ENCODE measurements at regions of chr3 and their contacts with region 1.

Region 1: GRCh38 chr3:33372218-33373081 is 67.8 kb downstream of the UBP1 start:
- DNase-seq: no peak
- H3K4me3 ChIP-seq: no peak overlapping the region
- CTCF ChIP-seq: peak; percentile 79

Region 2: DNA sequence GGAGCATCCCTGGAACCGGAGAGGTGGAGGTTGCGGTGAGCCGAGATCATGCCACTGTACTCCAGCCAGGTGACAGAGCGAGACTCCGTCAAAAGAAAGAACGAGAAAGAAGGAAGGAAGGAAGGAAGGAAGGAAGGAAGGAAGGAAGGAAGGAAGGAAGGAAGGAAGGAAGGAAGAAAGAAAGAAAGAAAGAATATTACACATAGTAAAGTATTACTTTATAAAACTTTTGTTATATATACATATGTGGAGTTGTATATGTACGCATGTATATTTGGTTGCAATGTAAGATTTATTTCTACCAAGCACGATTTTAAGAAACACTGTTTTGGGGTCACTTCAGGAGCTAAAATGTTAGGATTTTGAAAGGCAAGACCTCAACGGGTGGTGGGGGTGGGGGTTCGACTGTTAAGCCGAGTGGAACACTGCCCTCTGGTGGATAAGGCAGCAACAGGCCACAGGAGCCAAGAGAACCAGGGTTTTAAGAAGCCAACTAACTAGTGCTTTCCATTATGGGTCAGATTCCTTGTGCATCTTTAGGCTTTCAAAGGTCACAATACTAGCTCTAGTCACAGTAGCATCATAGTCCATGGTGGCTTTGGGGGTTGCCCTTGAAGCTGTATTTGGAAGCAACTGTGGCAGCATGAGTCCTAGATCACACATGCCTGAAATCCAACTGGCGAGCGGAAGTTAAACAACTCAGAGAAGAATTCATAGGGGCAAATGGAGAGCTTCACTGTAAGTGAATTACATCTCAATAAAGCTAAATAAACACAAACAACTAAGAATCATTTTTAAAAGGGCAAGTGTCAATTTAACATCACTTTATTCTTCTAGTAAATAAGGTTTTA is 298.0 kb before region 1 on chr3:
- CTCF ChIA-PET with region 1: interaction called, 18 read pairs
- POLR2A ChIA-PET with region 1: no interaction called
- DNase-seq: no peak
- H3K4me3 ChIP-seq: no peak overlapping the region
- CTCF ChIP-seq: peak; percentile 91

Region 3: DNA sequence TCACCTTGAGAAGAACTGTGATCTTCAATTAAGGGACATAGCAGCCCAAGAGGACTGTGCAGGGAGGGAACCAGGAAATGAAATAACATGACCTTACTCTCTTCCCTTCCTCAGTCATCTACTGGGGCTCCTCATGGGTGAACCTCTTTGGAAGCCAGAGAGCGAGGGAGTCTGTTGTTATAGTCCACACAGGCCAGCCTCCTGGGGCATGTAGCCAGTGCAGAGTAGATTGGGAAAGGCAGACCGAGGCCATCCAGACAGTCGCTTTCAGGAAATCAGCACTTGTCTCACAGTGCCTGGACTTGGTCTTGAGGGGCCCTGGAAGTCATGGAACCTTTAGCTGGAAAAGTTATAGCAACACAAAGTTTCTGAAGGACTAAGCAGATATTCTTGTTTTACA is 252.6 kb before region 1 on chr3:
- CTCF ChIA-PET with region 1: interaction called, 21 read pairs
- POLR2A ChIA-PET with region 1: no interaction called
- DNase-seq: no peak
- H3K4me3 ChIP-seq: no peak overlapping the region
- CTCF ChIP-seq: no peak

Region 4: DNA sequence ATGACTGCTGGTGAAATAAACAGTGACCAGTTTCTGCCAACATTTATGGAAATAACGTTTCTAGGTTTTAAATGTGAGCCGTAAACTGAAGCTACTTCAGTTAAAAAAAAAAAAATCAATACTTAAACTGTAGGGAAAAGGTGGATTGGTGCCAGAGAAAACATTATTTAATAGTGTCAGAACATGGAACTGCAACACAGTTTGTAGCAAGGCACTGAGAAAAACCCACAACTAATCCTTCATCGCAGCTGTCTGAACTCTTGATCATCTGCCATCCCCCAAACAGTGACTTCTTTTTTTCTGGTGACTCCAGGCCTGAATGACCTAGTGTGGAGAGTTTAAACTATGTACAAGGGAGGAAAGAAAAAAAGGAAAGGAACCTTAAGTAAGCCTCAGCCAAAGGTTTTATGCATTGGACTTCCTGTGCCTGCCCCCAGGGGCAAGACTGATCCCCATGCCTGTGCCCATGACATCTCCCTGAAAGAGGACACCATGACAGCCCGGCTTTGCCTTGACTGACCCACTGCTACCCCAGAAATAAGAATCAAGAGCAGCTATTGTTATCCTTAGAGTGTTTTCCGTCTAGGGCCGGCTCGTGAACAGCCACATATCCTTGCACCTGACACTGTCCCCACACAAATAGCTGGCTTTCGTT is 225.5 kb before region 1 on chr3:
- CTCF ChIA-PET with region 1: interaction called, 26 read pairs
- POLR2A ChIA-PET with region 1: no interaction called
- DNase-seq: no peak
- H3K4me3 ChIP-seq: no peak overlapping the region
- CTCF ChIP-seq: no peak

Region 5: DNA sequence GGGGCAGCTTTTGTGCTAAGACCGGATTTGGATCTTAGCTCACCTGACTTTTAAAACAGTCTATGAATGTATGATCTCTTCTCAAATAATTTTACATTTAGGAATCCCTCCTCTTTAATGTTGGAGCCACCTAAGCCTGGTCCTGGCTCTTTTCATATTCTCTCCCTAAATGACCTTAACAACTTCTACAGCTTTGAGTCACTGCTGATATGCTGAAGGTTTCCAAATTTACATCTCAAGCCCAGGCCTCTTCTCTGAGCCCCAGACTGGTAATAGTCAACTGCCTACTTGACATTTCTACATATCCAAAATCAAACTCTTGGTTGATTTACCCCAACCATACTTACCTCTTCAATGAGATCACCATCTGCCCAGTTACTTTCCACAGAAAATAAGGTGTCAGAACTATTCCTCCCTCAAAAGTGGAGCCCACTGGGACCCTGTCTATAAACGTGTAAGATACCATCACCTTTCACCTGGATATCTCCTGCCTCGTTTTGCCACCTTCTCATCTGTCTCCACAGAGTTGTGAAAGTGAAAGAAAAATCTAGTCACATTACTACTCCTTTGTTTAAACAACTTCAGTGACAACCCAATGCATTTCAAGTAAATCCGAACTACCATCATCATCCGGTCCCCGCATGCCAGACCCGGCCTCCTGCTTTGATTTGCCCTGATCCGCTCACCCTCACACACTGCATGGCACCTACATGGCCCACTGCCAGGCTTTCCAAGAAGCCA is 19.0 kb after region 1 on chr3:
- CTCF ChIA-PET with region 1: interaction called, 53 read pairs
- POLR2A ChIA-PET with region 1: no interaction called
- DNase-seq: no peak
- H3K4me3 ChIP-seq: no peak overlapping the region
- CTCF ChIP-seq: no peak

Region 6: DNA sequence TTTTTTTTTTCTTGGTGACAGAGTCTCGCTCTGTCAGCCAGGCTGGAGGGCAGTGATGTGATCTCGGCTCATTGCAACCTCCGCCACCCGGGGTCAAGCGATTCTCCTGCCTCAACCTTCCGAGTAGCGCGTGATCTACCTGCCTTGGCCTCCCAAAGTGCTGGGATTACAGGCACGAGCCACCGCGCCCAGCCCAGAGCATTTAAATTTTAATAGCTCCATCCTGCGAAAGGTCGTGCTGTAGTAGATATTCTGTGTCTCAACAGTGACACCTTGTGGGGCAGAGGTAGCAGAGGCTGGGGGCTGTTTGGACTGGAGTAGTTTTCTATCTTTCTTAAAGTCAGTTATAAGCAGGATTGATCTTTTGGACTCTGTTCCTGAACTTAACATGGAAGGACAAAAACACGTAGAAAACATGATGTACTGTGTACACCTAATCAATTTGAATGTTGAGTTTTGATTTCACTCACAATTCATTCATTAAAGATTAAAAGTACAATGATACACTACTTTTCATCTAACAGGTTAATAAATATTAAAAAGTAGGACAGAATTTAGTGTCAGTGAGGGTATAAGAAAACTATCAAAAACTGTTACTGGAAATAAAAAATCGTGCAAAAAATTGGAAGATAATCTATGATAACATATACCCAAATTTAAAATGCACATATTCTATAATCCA is 415.0 kb after region 1 on chr3:
- CTCF ChIA-PET with region 1: interaction called, 19 read pairs
- POLR2A ChIA-PET with region 1: no interaction called
- DNase-seq: peak; percentile 9
- H3K4me3 ChIP-seq: peak overlapping the region; percentile 51
- CTCF ChIP-seq: peak; percentile 79

Measured in AG04449 (cell line).